ENCODE measurements at regions of chr11 and their contacts with region 1.

Region 1: DNA sequence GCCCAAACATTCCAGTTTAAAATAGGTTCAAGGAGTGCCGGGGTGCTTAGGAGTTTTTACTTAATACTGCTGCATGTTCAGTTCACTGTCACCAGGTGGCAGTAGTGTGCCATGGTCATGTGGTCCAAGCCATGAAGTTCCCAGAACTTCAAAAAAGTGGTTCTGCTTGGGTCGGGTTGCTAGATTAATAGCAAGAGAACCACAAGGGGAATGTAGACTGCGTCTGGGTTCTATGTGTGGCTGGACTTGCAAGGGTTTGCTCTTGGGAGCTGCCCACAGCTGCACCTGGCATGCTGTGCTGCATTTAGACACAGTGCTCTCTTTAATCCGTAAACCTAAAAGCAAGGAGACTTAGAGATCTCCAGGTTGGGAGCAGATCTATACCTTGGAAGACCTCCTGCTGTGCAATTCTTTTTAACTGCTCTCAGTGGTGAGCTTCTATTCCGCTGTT is 6.5 kb upstream of the SPON1 start:
- DNase-seq: peak; percentile 54 to 65 (median 57)
- H3K4me3 ChIP-seq: no peak overlapping the region
- H3K4me3 Mint-ChIP-seq: no peak overlapping the region
- H3K27ac ChIP-seq: no peak overlapping the region
- H3K27ac Mint-ChIP-seq: no peak overlapping the region
- H3K4me1 ChIP-seq: peaks cover 11% of the 10 kb centered on the region
- H3K4me1 Mint-ChIP-seq: peaks cover 0 to 3% (median 1%) of the 10 kb centered on the region in 4 donors
- H3K27me3 ChIP-seq: peaks cover 3% of the 10 kb centered on the region
- H3K27me3 Mint-ChIP-seq: peaks cover 8 to 11% of the 10 kb centered on the region in 2 donors

Region 2: DNA sequence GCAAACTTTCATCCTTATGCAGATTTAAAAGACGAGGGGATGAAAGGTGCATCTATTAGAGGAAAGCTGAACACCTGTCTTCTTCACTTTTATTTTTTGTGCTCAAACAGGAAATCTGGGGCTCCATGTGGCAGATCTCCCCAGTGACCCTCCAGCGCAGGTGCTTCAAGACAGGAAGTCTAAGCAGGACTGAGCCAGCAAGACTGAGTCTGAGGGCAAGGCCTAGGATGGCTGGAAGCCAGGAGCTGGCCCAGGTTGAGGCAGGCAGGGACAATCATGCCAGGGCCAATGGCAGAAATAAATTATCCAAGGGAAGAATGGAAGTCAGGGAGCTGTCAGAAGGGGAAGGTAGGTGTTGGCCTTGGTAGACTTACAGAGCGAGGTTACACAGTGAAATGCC is 94.6 kb before region 1 on chr11:
- CTCF ChIA-PET with region 1: interaction called, 14 read pairs
- POLR2A ChIA-PET with region 1: no interaction called
- intact Hi-C with region 1: loop called (anchors 1 kb)
- DNase-seq: peak in 3 of 5 donors; percentile 16 to 25 (median 24)
- H3K4me3 ChIP-seq: no peak overlapping the region
- H3K4me3 Mint-ChIP-seq: peak overlapping the region in 7 of 8 donors; percentile 2 to 64 (median 33)
- H3K27ac ChIP-seq: no peak overlapping the region
- H3K27ac Mint-ChIP-seq: peak overlapping the region; percentile 37 to 90 (median 83)
- H3K4me1 ChIP-seq: peaks cover 23% of the 10 kb centered on the region
- H3K4me1 Mint-ChIP-seq: peaks cover 18 to 35% (median 31%) of the 10 kb centered on the region in 4 donors
- H3K27me3 ChIP-seq: no peaks in the 10 kb centered on the region
- H3K27me3 Mint-ChIP-seq: no peaks in the 10 kb centered on the region

Region 3: DNA sequence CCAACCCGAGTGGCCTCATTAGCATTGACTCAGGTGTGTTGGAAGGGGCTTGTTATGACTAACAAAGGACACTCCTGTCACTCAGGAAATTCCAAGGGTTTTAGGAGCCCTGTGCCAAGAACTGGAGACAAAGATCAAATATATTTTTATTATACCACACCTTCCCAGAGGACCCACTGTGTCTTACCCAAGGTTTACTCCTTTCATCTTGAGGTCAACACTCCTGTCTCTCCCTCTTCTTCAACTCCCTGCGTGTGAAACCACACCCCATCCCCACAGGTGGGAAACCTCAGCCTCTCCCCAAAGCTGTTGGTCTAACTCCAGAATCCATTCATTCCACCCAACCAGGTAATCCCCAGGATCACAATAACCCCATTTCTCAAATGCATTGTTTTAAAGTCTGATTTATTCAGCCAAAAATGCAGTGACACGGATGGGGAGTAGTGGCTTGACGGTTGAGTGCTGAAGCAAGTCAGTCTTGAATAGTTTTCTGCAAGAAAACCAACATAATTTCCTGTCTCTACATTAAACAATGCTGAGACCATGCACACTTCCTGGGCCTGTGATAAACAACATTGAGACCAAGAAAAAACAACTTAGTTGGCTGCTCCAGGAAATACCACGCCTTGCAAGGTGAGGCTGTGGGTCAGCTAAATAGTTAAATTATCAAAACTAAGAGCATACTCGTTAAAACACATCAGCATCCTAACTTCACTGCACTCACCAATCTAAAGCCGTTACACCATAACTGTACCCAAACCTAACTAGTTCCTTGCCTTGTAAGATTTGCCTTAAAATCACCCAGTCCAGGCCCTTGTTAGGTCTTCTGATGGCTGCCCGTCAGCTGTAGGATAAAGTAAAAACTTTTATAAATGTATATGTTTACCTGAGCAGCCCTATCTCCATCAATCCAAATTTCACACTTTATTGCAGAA is 32.0 kb before region 1 on chr11:
- CTCF ChIA-PET with region 1: interaction called, 29 read pairs
- POLR2A ChIA-PET with region 1: interaction called, 44 read pairs
- intact Hi-C with region 1: loop called (anchors 5 kb)
- DNase-seq: peak; percentile 37 to 66 (median 50)
- H3K4me3 ChIP-seq: peak overlapping the region in 1 of 2 donors; percentile 31
- H3K4me3 Mint-ChIP-seq: peak overlapping the region; percentile 15 to 92 (median 84)
- H3K27ac ChIP-seq: peak overlapping the region; percentile 46
- H3K27ac Mint-ChIP-seq: peak overlapping the region; percentile 95 to 99 (median 96)
- H3K4me1 ChIP-seq: peaks cover 59% of the 10 kb centered on the region
- H3K4me1 Mint-ChIP-seq: peaks cover 54 to 85% (median 65%) of the 10 kb centered on the region in 4 donors
- H3K27me3 ChIP-seq: no peaks in the 10 kb centered on the region
- H3K27me3 Mint-ChIP-seq: no peaks in the 10 kb centered on the region

Region 4: DNA sequence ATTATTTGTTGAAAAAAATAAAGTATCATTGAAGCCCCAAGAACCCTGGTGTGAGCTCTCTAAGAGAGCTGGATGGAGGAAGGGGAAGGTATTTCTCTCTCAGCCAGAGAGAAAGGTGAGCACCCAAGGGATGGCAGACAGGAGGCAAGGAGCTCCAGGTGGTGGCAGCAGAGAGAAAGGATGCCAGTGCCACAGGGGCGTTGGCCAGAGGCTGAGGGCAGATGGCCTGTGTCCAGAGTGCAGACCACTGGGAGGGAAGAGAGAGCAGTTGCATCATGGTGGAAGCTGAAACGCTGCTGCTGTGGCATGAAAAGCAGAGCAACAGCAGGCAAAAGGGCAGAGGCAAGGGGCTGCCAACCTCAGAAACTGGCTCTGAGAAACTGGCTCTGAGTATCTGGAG is 15.0 kb after region 1 on chr11:
- CTCF ChIA-PET with region 1: interaction called, 86 read pairs
- POLR2A ChIA-PET with region 1: no interaction called
- intact Hi-C with region 1: no loop called
- DNase-seq: no peak
- H3K4me3 ChIP-seq: no peak overlapping the region
- H3K4me3 Mint-ChIP-seq: no peak overlapping the region
- H3K27ac ChIP-seq: no peak overlapping the region
- H3K27ac Mint-ChIP-seq: peak overlapping the region in 4 of 7 donors; percentile 2 to 58 (median 33)
- H3K4me1 ChIP-seq: no peaks in the 10 kb centered on the region
- H3K4me1 Mint-ChIP-seq: peaks cover 0 to 9% (median 7%) of the 10 kb centered on the region in 4 donors
- H3K27me3 ChIP-seq: no peaks in the 10 kb centered on the region
- H3K27me3 Mint-ChIP-seq: peaks cover 5 to 6% of the 10 kb centered on the region in 2 donors

Region 5: GRCh38 chr11:14249121-14249963 is 293.3 kb after region 1 on chr11:
- CTCF ChIA-PET with region 1: interaction called, 38 read pairs
- POLR2A ChIA-PET with region 1: no interaction called
- intact Hi-C with region 1: loop called (anchors 1 kb)
- DNase-seq: peak; percentile 56 to 69 (median 63)
- H3K4me3 ChIP-seq: peak overlapping the region in 1 of 2 donors; percentile 42
- H3K4me3 Mint-ChIP-seq: peak overlapping the region; percentile 68 to 87 (median 72)
- H3K27ac ChIP-seq: no peak overlapping the region
- H3K27ac Mint-ChIP-seq: peak overlapping the region in 5 of 7 donors; percentile 6 to 50 (median 38)
- H3K4me1 ChIP-seq: peaks cover 18% of the 10 kb centered on the region
- H3K4me1 Mint-ChIP-seq: peaks cover 21 to 28% (median 24%) of the 10 kb centered on the region in 4 donors
- H3K27me3 ChIP-seq: no peaks in the 10 kb centered on the region
- H3K27me3 Mint-ChIP-seq: no peaks in the 10 kb centered on the region